ENCODE measurements at regions of chr19 and their contacts with region 1.

Region 1: GRCh38 chr19:2475702-2476450 is at the start of gene GADD45B:
- DNase-seq: peak; percentile 91 to 99 (median 96)
- ATAC-seq: peak; percentile 56 to 70 (median 70)
- H3K4me3 ChIP-seq: peak within 1 kb of the TSS; percentile 87 to 100
- H3K4me3 Mint-ChIP-seq: peak within 1 kb of the TSS; percentile 95 to 100 (median 99)
- H3K27ac ChIP-seq: peak within 1 kb of the TSS; percentile 76
- H3K27ac Mint-ChIP-seq: peak within 1 kb of the TSS; percentile 85 to 99
- H3K4me1 ChIP-seq: peaks cover 13 to 47% of the 10 kb centered on the region in 2 experiments
- H3K4me1 Mint-ChIP-seq: peaks cover 11 to 33% (median 23%) of the 10 kb centered on the region in 3 donors
- H3K27me3 ChIP-seq: no peaks in the 10 kb centered on the region
- H3K27me3 Mint-ChIP-seq: no peaks in the 10 kb centered on the region
- total RNA-seq, gene GADD45B: 76.5 to 174 (median 102) TPM

Region 2: DNA sequence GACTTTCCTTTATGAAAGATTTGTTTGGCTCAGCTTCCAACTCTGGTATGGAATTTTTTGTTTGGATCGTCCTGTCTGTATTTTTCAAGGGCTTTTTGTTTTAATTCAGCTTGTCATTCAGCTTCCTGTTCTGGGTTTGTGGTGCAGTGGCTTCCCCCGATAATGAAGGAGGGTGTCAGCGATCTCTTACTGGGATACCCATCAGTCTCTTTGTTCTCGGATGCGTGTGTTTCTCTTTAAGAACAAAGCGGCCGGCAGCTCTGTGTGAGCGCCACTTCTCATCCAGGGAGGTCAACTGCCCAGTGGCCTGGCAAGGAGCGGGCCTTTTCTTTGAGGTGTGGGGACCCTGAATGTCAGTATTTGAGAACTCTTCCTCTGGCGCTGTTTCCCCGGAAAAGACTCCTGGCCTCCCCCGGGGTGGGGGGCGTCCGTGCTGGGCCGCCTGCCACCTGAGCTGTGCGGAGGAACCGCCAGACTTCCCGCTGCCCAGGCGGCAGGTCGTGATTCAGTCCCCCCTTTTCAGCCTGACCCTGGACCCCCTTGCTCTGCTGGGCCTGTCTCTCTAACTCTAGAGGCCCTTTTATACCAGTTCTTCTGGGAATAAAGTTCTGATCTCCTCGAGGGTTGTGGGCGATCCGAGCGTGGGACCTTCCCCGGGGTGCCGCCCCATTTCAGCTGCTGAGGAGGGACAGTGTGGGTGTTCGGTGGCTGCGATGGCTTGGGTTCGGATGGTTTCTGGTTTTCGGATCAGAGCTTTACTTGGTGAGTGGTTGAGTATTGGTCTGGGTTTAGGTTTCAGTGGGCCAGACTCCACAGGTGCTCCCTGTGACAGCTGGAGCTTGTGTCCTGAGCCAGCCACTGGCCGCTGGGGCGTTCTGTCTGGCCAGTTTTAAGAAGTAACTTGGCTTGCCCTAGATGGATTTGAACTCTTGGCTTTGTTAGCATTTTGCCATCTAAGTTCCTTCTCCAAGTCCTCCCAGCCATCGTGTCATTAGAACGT is 235.8 kb before region 1 on chr19:
- CTCF ChIA-PET with region 1: no interaction called
- POLR2A ChIA-PET with region 1: interaction called, 3 to 11 read pairs
- DNase-seq: peak in 22 of 35 experiments; percentile 17 to 72 (median 40)
- ATAC-seq: peak in 1 of 4 experiments; percentile 15
- H3K4me3 ChIP-seq: peak overlapping the region; percentile 46 to 70
- H3K4me3 Mint-ChIP-seq: peak overlapping the region; percentile 94 to 96 (median 95)
- H3K27ac ChIP-seq: peak overlapping the region; percentile 60
- H3K27ac Mint-ChIP-seq: peak overlapping the region; percentile 88 to 97
- H3K4me1 ChIP-seq: peaks cover 30 to 81% of the 10 kb centered on the region in 2 experiments
- H3K4me1 Mint-ChIP-seq: peaks cover 59 to 69% (median 68%) of the 10 kb centered on the region in 3 donors
- H3K27me3 ChIP-seq: no peaks in the 10 kb centered on the region
- H3K27me3 Mint-ChIP-seq: no peaks in the 10 kb centered on the region

Region 3: DNA sequence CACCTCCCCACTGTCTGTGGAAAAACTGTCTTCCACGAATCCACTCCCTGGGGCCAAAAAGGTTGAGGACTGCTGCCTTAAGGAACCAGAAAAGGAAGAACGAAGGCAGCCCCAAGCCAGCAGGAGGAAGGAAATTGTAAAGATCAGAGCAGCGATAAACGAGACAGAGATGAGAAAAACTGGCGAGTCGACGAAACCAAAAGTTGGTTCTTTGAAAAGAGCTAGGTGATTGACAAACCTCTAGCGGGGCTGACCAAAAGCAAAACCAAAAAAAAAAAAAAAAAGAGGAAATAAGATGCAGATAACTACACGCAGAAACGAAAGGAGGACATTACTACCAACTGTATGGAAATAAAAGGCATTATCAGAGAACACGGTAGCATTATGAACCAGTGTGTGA is 77.0 kb after region 1 on chr19:
- CTCF ChIA-PET with region 1: interaction called in 1 of 2 experiments, 8 read pairs
- POLR2A ChIA-PET with region 1: interaction called, 6 to 10 read pairs
- DNase-seq: peak in 32 of 35 experiments; percentile 19 to 84 (median 44)
- ATAC-seq: peak; percentile 89 to 94 (median 91)
- H3K4me3 ChIP-seq: peak overlapping the region; percentile 29 to 37
- H3K4me3 Mint-ChIP-seq: peak overlapping the region; percentile 68 to 85 (median 73)
- H3K27ac ChIP-seq: peak overlapping the region; percentile 67
- H3K27ac Mint-ChIP-seq: peak overlapping the region; percentile 86 to 90
- H3K4me1 ChIP-seq: peaks cover 2 to 18% of the 10 kb centered on the region in 2 experiments
- H3K4me1 Mint-ChIP-seq: peaks cover 20 to 32% (median 21%) of the 10 kb centered on the region in 3 donors
- H3K27me3 ChIP-seq: no peaks in the 10 kb centered on the region
- H3K27me3 Mint-ChIP-seq: no peaks in the 10 kb centered on the region

Region 4: GRCh38 chr19:2610637-2611482 is 135.0 kb after region 1 on chr19:
- CTCF ChIA-PET with region 1: interaction called, 5 to 18 read pairs
- POLR2A ChIA-PET with region 1: interaction called, 9 to 21 read pairs
- DNase-seq: peak; percentile 49 to 93 (median 82)
- ATAC-seq: peak; percentile 63 to 76 (median 74)
- H3K4me3 ChIP-seq: peak overlapping the region; percentile 45 to 72
- H3K4me3 Mint-ChIP-seq: peak overlapping the region; percentile 72 to 80 (median 77)
- H3K27ac ChIP-seq: no peak overlapping the region
- H3K27ac Mint-ChIP-seq: peak overlapping the region in 1 of 2 donors; percentile 46
- H3K4me1 ChIP-seq: peaks cover 11 to 42% of the 10 kb centered on the region in 2 experiments
- H3K4me1 Mint-ChIP-seq: peaks cover 39 to 44% (median 40%) of the 10 kb centered on the region in 3 donors
- H3K27me3 ChIP-seq: peaks cover 0 to 9% of the 10 kb centered on the region in 2 experiments
- H3K27me3 Mint-ChIP-seq: peaks cover 0 to 3% of the 10 kb centered on the region in 2 donors

Region 5: GRCh38 chr19:2627319-2627829 is 151.5 kb after region 1 on chr19:
- CTCF ChIA-PET with region 1: interaction called, 4 to 21 read pairs
- POLR2A ChIA-PET with region 1: interaction called, 3 to 52 read pairs
- DNase-seq: peak in 1 of 35 experiments; percentile 28
- ATAC-seq: peak; percentile 31 to 50 (median 32)
- H3K4me3 ChIP-seq: no peak overlapping the region
- H3K4me3 Mint-ChIP-seq: peak overlapping the region in 1 of 3 donors; percentile 47
- H3K27ac ChIP-seq: peak overlapping the region; percentile 23
- H3K27ac Mint-ChIP-seq: peak overlapping the region; percentile 80 to 86
- H3K4me1 ChIP-seq: peaks cover 0 to 61% of the 10 kb centered on the region in 2 experiments
- H3K4me1 Mint-ChIP-seq: peaks cover 42 to 62% (median 53%) of the 10 kb centered on the region in 3 donors
- H3K27me3 ChIP-seq: no peaks in the 10 kb centered on the region
- H3K27me3 Mint-ChIP-seq: no peaks in the 10 kb centered on the region

Region 6: GRCh38 chr19:3171894-3172672 is 696.2 kb after region 1 on chr19:
- CTCF ChIA-PET with region 1: no interaction called
- POLR2A ChIA-PET with region 1: no interaction called
- DNase-seq: no peak
- ATAC-seq: no peak
- H3K4me3 ChIP-seq: no peak overlapping the region
- H3K4me3 Mint-ChIP-seq: no peak overlapping the region
- H3K27ac ChIP-seq: no peak overlapping the region
- H3K27ac Mint-ChIP-seq: peak overlapping the region; percentile 47 to 79
- H3K4me1 ChIP-seq: peaks cover 8 to 33% of the 10 kb centered on the region in 2 experiments
- H3K4me1 Mint-ChIP-seq: peaks cover 15 to 33% (median 21%) of the 10 kb centered on the region in 3 donors
- H3K27me3 ChIP-seq: no peaks in the 10 kb centered on the region
- H3K27me3 Mint-ChIP-seq: no peaks in the 10 kb centered on the region

Measured in T-cell (primary cell).